T-cell (primary cell): ENCODE measurements at regions of chr21 and their contacts with region 1.

Region 1: DNA sequence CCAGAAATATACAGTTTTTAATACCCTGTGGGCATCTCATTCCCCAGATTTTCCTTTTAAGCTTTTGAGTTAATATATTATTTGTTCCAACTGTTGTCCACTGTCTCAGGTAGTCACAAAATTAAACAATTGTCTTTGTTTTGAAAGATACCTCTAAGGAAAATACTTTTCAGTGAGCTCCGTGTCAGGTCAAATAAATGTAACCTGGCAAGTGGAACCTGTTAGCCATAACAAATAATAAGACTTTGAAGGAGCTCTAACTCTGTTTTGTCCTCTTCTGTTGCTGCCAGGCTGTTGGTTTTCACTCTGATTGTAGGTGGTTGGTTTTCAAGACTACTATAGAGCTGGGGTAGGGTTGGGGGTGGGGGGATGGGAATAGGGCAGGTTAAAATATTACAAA is 24.7 kb downstream of the PCBP3 start:
- DNase-seq: no peak
- ATAC-seq: no peak
- H3K4me3 ChIP-seq: peak overlapping the region in 1 of 2 donors; percentile 23
- H3K4me3 Mint-ChIP-seq: no peak overlapping the region
- H3K27ac ChIP-seq: no peak overlapping the region
- H3K27ac Mint-ChIP-seq: no peak overlapping the region
- H3K4me1 ChIP-seq: no peaks in the 10 kb centered on the region
- H3K4me1 Mint-ChIP-seq: peaks cover 0 to 5% (median 0%) of the 10 kb centered on the region in 3 donors
- H3K27me3 ChIP-seq: peaks cover 0 to 2% of the 10 kb centered on the region in 2 experiments
- H3K27me3 Mint-ChIP-seq: peaks cover 0 to 2% of the 10 kb centered on the region in 2 donors

Region 2: DNA sequence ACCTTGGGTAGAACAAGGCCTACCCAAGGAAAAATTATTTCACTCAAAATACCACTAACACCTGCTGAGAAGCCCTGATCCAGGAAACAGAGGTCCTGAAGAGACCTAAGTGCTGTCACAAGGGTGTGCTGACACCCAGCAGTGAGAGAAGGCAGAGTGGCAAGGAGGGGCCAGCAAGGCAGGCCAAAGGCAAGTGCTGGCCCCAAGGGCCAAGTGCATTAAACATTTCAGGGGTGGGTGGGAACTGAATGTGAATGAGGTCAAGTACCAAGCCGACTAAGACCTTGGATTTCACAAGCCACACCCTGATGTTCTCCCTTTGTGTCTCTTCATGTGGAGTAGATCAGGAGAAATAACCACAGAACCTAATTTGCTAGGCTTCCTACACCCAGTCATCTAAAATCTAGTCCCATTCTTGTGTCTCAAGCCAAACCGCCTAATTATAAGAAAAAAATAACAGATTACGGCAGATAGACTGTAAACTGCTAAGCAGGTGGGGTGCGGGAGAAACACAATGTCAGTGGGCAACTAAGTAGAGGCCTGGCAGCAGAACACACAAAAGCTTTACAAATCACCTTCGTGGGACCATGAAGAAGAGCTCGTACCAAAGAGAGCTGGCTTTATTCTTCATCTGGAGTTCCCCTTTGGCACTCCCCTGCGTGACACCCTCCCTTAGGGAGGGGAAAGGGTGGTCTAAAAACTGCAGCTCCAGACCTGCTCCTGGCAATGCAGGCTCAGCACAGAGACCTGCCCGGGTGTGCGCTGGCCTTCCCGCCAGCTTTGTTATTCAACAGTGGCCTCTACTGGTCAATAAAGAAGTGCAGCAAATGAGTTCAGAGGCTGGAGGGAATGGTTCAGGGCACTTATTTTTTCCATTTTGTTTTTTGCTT is 875.3 kb before region 1 on chr21:
- CTCF ChIA-PET with region 1: no interaction called
- POLR2A ChIA-PET with region 1: no interaction called
- DNase-seq: peak; percentile 16 to 72 (median 42)
- ATAC-seq: peak; percentile 90 to 95 (median 92)
- H3K4me3 ChIP-seq: no peak overlapping the region
- H3K4me3 Mint-ChIP-seq: no peak overlapping the region
- H3K27ac ChIP-seq: no peak overlapping the region
- H3K27ac Mint-ChIP-seq: peak overlapping the region in 1 of 2 donors; percentile 15
- H3K4me1 ChIP-seq: peaks cover 0 to 10% of the 10 kb centered on the region in 2 experiments
- H3K4me1 Mint-ChIP-seq: peaks cover 49 to 59% (median 59%) of the 10 kb centered on the region in 3 donors
- H3K27me3 ChIP-seq: no peaks in the 10 kb centered on the region
- H3K27me3 Mint-ChIP-seq: no peaks in the 10 kb centered on the region

Region 3: GRCh38 chr21:45680215-45680614 is 12.0 kb after region 1 on chr21:
- CTCF ChIA-PET with region 1: interaction called in 1 of 2 experiments, 10 read pairs
- POLR2A ChIA-PET with region 1: no interaction called
- DNase-seq: no peak
- ATAC-seq: no peak
- H3K4me3 ChIP-seq: no peak overlapping the region
- H3K4me3 Mint-ChIP-seq: no peak overlapping the region
- H3K27ac ChIP-seq: no peak overlapping the region
- H3K27ac Mint-ChIP-seq: no peak overlapping the region
- H3K4me1 ChIP-seq: no peaks in the 10 kb centered on the region
- H3K4me1 Mint-ChIP-seq: peaks cover 0 to 2% (median 0%) of the 10 kb centered on the region in 3 donors
- H3K27me3 ChIP-seq: no peaks in the 10 kb centered on the region
- H3K27me3 Mint-ChIP-seq: peaks cover 4 to 15% of the 10 kb centered on the region in 2 donors